WTC11 (cell line): ENCODE measurements at regions of chr5 and their contacts with region 1.

Region 1: GRCh38 chr5:149618581-149619251 is 37.4 kb downstream of the ARHGEF37 start:
- DNase-seq: peak; percentile 58
- ATAC-seq: peak; percentile 92
- H3K4me3 Mint-ChIP-seq: no peak overlapping the region
- H3K27ac Mint-ChIP-seq: no peak overlapping the region
- H3K4me1 Mint-ChIP-seq: peaks cover 10% of the 10 kb centered on the region
- H3K27me3 Mint-ChIP-seq: no peaks in the 10 kb centered on the region
- CTCF ChIP-seq: peak; percentile 64

Region 2: GRCh38 chr5:149561848-149562247 is 56.9 kb before region 1 on chr5:
- CTCF ChIA-PET with region 1: interaction called, 11 read pairs
- POLR2A ChIA-PET with region 1: interaction called, 14 read pairs
- DNase-seq: no peak
- ATAC-seq: peak; percentile 58
- H3K4me3 Mint-ChIP-seq: no peak overlapping the region
- H3K27ac Mint-ChIP-seq: peak overlapping the region; percentile 94
- H3K4me1 Mint-ChIP-seq: peaks cover 38% of the 10 kb centered on the region
- H3K27me3 Mint-ChIP-seq: no peaks in the 10 kb centered on the region
- CTCF ChIP-seq: no peak

Region 3: GRCh38 chr5:149581192-149581861 is 37.4 kb before region 1 on chr5 and contains the start of gene ARHGEF37:
- CTCF ChIA-PET with region 1: interaction called, 17 read pairs
- POLR2A ChIA-PET with region 1: no interaction called
- DNase-seq: peak; percentile 53
- ATAC-seq: peak; percentile 82
- H3K4me3 Mint-ChIP-seq: peak within 1 kb of the TSS; percentile 72
- H3K27ac Mint-ChIP-seq: no peak within 1 kb of the TSS
- H3K4me1 Mint-ChIP-seq: peaks cover 18% of the 10 kb centered on the region
- H3K27me3 Mint-ChIP-seq: peaks cover 35% of the 10 kb centered on the region
- CTCF ChIP-seq: no peak
- total RNA-seq, gene ARHGEF37: 0.66 to 1.1 TPM (median 0.71 TPM) in 3 replicates

Region 4: GRCh38 chr5:149596713-149597112 is 22.0 kb before region 1 on chr5:
- CTCF ChIA-PET with region 1: interaction called, 14 read pairs
- POLR2A ChIA-PET with region 1: no interaction called
- DNase-seq: no peak
- ATAC-seq: peak; percentile 67
- H3K4me3 Mint-ChIP-seq: no peak overlapping the region
- H3K27ac Mint-ChIP-seq: peak overlapping the region; percentile 69
- H3K4me1 Mint-ChIP-seq: peaks cover 7% of the 10 kb centered on the region
- H3K27me3 Mint-ChIP-seq: no peaks in the 10 kb centered on the region
- CTCF ChIP-seq: no peak

Region 5: DNA sequence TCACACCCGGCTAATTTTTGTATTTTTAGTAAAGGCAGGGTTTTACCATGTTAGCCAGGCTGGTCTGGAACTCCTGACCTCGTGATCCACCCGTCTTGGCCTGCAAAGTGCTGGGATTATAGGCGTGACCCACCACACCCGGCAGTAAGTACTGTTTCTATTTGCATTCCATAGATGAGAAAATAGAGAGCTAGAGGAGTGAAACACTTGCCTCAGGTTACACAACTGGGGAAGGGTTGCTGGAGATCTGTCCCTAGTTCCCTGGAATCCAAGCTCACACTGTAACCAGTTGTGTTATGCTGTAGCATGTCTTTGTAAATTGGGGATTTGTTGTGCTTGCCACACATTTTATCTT is 10.2 kb before region 1 on chr5:
- CTCF ChIA-PET with region 1: interaction called, 14 read pairs
- POLR2A ChIA-PET with region 1: no interaction called
- DNase-seq: no peak
- ATAC-seq: no peak
- H3K4me3 Mint-ChIP-seq: no peak overlapping the region
- H3K27ac Mint-ChIP-seq: no peak overlapping the region
- H3K4me1 Mint-ChIP-seq: peaks cover 8% of the 10 kb centered on the region
- H3K27me3 Mint-ChIP-seq: no peaks in the 10 kb centered on the region
- CTCF ChIP-seq: no peak

Region 6: GRCh38 chr5:149636851-149637246 is 18.1 kb after region 1 on chr5:
- CTCF ChIA-PET with region 1: interaction called, 11 read pairs
- POLR2A ChIA-PET with region 1: no interaction called
- DNase-seq: peak; percentile 50
- ATAC-seq: peak; percentile 78
- H3K4me3 Mint-ChIP-seq: no peak overlapping the region
- H3K27ac Mint-ChIP-seq: no peak overlapping the region
- H3K4me1 Mint-ChIP-seq: peaks cover 24% of the 10 kb centered on the region
- H3K27me3 Mint-ChIP-seq: no peaks in the 10 kb centered on the region
- CTCF ChIP-seq: peak; percentile 59; the same call in 1 of the 2 replicates

Region 7: DNA sequence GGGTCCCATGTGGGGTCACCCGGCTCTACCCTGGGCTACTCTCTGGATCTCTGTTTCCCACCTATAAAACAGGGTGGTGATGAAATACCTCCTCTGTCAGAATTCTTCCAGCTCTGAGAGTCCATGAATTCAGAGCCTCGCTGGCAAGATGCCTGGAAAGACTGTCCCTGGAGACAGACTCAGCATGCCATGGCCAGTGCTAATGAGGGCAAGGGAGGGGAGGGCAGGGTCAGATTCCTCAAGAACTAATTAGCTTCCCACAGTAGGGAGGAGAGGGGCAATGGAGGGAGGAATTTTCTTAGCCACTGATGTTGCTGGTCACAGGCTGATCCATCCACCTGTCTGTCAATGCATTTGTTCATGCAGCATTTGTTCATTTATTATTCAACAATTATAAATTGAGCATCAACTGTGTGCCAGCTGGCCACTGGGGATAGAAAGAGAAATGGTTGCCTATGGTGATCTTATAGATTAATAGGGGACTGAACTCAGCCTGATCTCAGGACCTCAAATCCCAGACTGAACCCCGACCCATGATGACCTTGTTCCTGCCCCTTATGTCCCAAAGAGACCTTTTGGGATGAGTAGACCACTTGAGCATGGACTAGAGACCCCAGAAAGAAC is 1026.5 kb after region 1 on chr5:
- CTCF ChIA-PET with region 1: no interaction called
- POLR2A ChIA-PET with region 1: no interaction called
- DNase-seq: no peak
- ATAC-seq: no peak; the same call in 1 of the 2 replicates
- H3K4me3 Mint-ChIP-seq: no peak overlapping the region
- H3K27ac Mint-ChIP-seq: no peak overlapping the region
- H3K4me1 Mint-ChIP-seq: peaks cover 32% of the 10 kb centered on the region
- H3K27me3 Mint-ChIP-seq: no peaks in the 10 kb centered on the region
- CTCF ChIP-seq: no peak